Right ventricle myocardium inferior (tissue), 1 donor: ENCODE measurements at regions of chr11 and their contacts with region 1.

Region 1: DNA sequence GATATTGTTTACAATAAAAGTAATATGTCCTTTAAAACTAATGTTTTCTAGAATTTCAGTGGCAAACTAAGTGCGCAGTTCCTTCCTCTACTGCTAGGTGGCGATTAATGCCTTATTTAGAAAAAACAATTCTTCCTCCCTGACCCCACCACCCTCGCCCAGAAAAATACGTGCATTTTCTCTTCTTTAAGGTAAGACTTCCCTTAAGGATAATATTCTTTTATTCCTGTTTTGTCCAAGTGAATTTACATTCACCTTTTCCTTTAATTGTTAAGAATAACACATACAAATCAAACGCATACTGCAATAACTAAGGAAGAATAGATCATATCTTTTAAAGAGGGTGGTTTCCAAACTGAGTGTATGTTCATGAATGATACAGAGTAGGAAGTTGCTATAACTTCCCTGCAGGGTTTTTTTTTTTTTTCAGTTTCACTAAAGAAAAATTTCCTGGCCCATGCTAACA is 17.0 kb upstream of the PSMA1 start:
- DNase-seq: no peak
- ATAC-seq: no peak

Region 2: DNA sequence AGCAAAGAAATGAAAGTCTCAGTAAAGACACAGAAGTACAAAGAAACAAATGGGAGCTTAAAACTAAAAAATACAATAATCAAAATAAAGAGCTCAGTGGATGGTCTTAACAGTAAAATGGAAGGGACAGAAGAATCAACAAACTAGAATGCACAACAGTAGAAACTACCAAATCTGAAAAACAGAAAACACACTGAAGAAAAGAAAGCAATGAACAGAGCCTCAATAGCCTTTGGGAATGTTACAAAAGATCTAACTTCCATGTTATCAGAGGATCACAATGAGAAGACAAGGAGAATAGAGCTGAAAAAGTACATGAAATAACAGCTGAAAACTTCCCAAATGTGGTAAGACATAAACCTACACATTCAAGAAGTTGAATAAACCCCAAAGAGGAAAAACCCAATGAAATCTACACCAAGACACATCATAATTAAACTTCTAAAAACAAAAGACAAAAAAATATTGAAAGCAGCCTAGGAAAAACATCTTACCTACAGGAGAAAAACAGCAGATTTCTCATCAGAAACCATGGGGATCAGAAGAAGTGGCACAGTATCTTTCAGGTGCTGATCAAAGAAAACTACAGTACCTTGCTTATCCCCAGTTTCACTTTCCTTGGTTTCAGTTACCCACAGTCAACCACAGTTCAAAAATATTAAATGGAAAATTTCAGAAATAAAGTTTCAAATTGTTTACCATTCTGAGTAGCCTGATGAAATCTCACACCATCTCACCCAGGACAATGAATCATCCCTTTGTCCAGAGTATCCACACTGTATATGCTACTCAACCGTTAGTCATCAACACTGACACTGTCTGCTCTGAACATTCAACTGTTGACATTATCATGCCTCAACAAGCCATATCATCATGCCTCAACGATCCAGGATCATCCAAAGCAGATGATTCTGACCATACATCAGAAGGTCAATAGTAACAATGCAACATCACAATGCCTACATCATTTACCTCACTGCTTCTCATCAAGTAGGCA is 200.4 kb before region 1 on chr11:
- intact Hi-C with region 1: no loop called
- DNase-seq: no peak
- ATAC-seq: no peak

Region 3: GRCh38 chr11:14583252-14584034 is 46.3 kb after region 1 on chr11:
- intact Hi-C with region 1: loop called (anchors 5 kb)
- DNase-seq: peak; percentile 67
- ATAC-seq: peak; percentile 88

Region 4: DNA sequence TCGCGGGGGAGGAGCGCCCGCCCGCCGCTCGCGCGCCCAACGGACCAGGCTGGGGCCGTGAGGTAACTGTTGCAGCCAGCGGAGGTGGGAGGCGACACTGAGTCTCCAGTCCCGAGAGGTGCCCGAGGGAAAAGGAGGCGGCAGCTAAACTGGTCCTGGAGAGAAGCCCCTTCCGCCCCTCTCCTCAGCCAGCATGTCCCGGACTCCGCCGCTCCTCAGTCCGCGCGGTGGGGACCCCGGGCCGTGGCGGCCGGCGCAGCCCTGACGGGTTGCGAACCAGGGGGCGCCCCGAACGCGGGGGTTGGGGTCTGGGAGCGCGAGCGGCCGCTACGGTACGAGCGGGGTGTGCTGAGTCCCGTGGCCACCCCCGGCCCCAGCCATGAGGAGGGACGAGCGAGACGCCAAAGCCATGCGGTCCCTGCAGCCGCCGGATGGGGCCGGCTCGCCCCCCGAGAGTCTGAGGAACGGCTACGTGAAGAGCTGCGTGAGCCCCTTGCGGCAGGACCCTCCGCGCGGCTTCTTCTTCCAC is 106.6 kb after region 1 on chr11 and contains the start of gene PDE3B:
- intact Hi-C with region 1: loop called (anchors 1 kb)
- DNase-seq: peak; percentile 93
- ATAC-seq: peak; percentile 95
- total RNA-seq, gene PDE3B: 4.5 TPM

Region 5: GRCh38 chr11:14892036-14892567 is 354.9 kb after region 1 on chr11 and contains the start of gene CYP2R1:
- intact Hi-C with region 1: loop called (anchors 5 kb)
- DNase-seq: peak; percentile 97
- ATAC-seq: peak; percentile 99
- total RNA-seq, gene CYP2R1: 7.0 TPM